Colonic mucosa (tissue), 4 donors: ENCODE measurements at regions of chr10 and their contacts with region 1.

Region 1: DNA sequence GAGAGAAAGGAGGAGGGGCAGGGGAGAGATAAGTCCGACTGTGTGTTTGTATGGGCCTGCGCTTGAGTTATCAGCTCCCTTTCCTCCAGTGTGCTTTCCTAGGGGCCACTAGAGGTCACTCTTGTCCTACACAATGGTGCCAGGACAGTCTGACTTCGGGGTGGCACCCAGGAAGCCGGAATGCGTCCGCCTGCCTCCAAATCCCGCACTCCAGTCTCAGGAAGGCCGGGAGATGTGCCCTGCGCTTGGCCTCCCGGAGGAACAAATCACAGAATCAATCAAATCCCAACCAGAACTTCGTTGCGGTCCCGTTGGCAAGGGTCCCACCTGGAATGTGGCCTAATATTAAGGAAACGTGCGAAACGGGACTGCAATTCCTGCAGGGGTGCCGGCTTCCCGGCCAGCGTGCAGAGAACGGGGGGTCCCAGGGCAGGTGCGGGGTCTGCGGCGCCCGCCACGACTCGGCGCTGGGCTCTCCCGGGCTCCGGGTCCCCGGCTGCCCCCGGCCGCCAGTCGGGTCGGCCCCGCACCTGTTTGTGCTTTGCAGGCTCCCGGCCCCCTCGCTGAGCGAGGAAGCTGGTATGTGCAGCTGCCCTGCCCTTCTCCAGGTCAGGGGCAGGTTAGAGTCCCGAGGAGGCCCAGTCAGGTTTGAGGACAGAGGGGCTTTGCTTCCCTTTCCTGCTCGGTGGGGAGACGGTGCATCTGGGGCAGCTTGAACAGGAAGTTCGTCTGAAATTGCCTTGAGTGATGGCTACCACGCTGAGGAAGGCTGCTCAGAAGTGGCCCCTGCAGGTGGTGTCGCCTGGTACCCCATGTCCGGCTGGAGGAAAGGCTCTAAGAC is 21.0 kb upstream of the HPS1 start:
- DNase-seq: peak; percentile 77
- H3K4me3 ChIP-seq: peak overlapping the region; percentile 69
- H3K27ac ChIP-seq: no peak overlapping the region
- H3K4me1 ChIP-seq: no peaks in the 10 kb centered on the region
- H3K27me3 ChIP-seq: no peaks in the 10 kb centered on the region
- CTCF ChIP-seq: peak; percentile 78

Region 2: GRCh38 chr10:98577578-98577977 is 109.9 kb after region 1 on chr10:
- intact Hi-C with region 1: loop called (anchors 10 kb)
- DNase-seq: no peak
- H3K4me3 ChIP-seq: no peak overlapping the region
- H3K27ac ChIP-seq: no peak overlapping the region
- H3K4me1 ChIP-seq: peaks cover 4% of the 10 kb centered on the region
- H3K27me3 ChIP-seq: no peaks in the 10 kb centered on the region
- CTCF ChIP-seq: no peak

Region 3: GRCh38 chr10:98664331-98665042 is 196.8 kb after region 1 on chr10:
- intact Hi-C with region 1: loop called (anchors 5 kb)
- DNase-seq: peak; percentile 19
- H3K4me3 ChIP-seq: no peak overlapping the region
- H3K27ac ChIP-seq: no peak overlapping the region
- H3K4me1 ChIP-seq: no peaks in the 10 kb centered on the region
- H3K27me3 ChIP-seq: no peaks in the 10 kb centered on the region
- CTCF ChIP-seq: peak; percentile 48

Region 4: GRCh38 chr10:99172130-99172738 is 704.5 kb after region 1 on chr10:
- intact Hi-C with region 1: loop called (anchors 5 kb)
- DNase-seq: peak; percentile 22
- H3K4me3 ChIP-seq: no peak overlapping the region
- H3K27ac ChIP-seq: no peak overlapping the region
- H3K4me1 ChIP-seq: no peaks in the 10 kb centered on the region
- H3K27me3 ChIP-seq: no peaks in the 10 kb centered on the region
- CTCF ChIP-seq: peak; percentile 38

Region 5: DNA sequence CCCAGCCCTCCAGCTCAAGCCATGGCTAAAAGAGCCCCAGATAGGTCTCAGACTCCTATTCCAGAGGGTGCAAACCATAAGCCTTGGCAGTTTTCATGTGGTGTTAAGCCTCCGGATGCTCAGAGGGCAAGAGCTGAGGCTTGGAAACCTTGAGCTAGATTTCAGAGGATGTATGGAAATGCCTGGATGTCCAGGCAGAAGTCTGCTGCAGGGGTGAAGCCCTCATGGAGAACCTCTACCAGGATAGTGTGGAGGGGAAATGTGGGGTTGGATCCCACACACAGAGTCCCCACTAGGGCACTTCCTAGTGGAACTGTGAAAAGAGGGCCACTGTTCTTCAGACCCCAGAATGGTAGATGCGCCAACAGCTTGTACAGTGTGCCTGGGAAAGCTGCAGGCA is 781.1 kb after region 1 on chr10:
- intact Hi-C with region 1: loop called (anchors 5 kb)
- DNase-seq: no peak
- H3K4me3 ChIP-seq: no peak overlapping the region
- H3K27ac ChIP-seq: no peak overlapping the region
- H3K4me1 ChIP-seq: no peaks in the 10 kb centered on the region
- H3K27me3 ChIP-seq: no peaks in the 10 kb centered on the region
- CTCF ChIP-seq: no peak